ENCODE measurements at regions of chr11 and their contacts with region 1.

Region 1: GRCh38 chr11:119018074-119018938 is at the starts of genes RPS25 and TRAPPC4:
- DNase-seq: peak; percentile 99
- ATAC-seq: peak; percentile 82
- H3K4me3 ChIP-seq: peak within 1 kb of the TSS; percentile 98
- H3K27ac ChIP-seq: peak within 1 kb of the TSS; percentile 88
- H3K4me1 ChIP-seq: peaks cover 31% of the 10 kb centered on the region
- H3K27me3 ChIP-seq: no peaks in the 10 kb centered on the region
- CTCF ChIP-seq: no peak
- total RNA-seq, gene RPS25: 813 and 931 TPM in 2 replicates
- total RNA-seq, gene TRAPPC4: 129 and 150 TPM in 2 replicates

Region 2: GRCh38 chr11:118791111-118791965 is 227.0 kb before region 1 on chr11 and contains the start of gene DDX6:
- CTCF ChIA-PET with region 1: no interaction called
- POLR2A ChIA-PET with region 1: interaction called, 10 read pairs
- intact Hi-C with region 1: no loop called
- DNase-seq: peak; percentile 75
- ATAC-seq: peak; percentile 65
- H3K4me3 ChIP-seq: peak within 1 kb of the TSS; percentile 88
- H3K27ac ChIP-seq: peak within 1 kb of the TSS; percentile 81
- H3K4me1 ChIP-seq: peaks cover 31% of the 10 kb centered on the region
- H3K27me3 ChIP-seq: no peaks in the 10 kb centered on the region
- CTCF ChIP-seq: peak; percentile 26
- total RNA-seq, gene DDX6: 59.4 and 66.3 TPM in 2 replicates

Region 3: DNA sequence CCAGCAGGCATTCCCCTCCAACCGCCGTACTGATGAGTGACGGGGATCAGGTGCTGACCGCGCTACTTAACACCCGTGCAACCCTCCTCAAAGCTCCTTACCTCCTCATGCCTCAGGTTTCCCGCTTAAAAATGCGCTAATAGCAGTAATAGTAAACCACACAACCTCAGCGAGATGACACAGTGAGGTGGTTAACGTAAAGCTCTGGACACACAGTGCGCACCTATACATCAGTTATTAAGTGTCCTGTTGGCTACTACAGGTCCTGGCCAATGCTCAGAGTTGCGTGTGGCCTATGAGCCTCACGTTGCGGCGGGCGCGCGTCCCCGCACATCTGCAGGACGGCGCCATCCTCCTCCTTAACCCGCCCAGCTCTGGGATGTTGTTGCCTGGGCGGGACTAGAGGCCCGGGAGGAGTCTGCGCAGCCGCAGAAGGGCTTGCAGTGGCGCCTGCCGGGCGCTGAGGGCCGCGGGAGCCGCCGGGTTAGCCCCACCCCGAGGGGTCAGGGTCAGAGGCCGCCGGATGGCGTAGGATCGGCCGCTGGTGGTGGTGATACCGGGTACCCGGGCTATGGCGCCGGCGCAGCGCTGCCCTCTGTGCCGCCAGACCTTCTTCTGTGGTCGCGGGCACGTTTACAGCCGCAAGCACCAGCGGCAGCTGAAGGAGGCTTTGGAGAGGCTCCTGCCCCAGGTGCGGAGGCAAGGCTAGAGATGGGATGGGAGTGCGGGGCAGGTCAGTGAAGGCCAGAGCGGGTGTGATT is 20.5 kb before region 1 on chr11 and contains the start of gene CENATAC:
- CTCF ChIA-PET with region 1: interaction called, 7 read pairs
- POLR2A ChIA-PET with region 1: interaction called, 13 read pairs
- intact Hi-C with region 1: loop called (anchors 2 kb)
- DNase-seq: peak; percentile 95
- ATAC-seq: peak; percentile 92
- H3K4me3 ChIP-seq: peak within 1 kb of the TSS; percentile 77
- H3K27ac ChIP-seq: peak within 1 kb of the TSS; percentile 41
- H3K4me1 ChIP-seq: peaks cover 38% of the 10 kb centered on the region
- H3K27me3 ChIP-seq: no peaks in the 10 kb centered on the region
- CTCF ChIP-seq: no peak
- total RNA-seq, gene CENATAC: 83.5 and 88.0 TPM in 2 replicates

Region 4: DNA sequence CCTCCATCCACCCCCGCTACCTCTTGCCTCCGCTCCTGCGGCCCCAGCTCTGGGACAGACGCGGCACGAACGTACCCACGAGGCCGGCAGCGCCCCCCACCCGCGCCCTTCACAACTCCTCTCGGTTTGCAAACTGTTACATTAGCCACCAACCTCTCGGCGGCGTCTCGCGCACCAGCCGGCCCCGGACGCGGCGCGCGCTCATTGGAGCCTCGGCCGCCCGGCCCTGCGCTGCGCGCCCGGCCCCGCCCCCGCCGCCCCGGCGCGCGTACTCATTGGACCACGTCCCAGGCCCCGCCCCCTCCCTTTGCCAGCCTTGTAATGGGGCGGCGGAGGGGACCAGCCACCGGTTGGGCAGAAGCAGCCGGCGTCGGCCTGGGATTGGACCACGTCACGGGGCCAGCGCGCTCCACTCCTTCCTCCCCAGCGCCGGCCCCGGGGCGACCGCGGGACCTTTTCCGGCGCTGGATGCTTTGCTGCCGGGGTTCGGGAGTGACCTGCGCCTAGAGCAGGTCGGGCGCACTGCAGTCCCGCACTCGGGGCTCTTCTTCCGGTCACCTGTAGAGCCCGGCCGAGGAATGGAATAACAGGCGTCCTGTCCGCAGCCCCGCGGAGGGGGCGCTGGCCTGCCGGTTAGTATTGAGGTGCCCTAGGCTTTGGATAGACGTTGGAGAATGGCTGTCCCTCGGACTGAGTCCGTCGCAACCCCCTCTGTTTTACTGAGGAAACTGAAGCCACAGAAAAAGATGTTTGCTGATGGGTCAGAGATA is 38.9 kb after region 1 on chr11 and contains the start of gene HYOU1:
- CTCF ChIA-PET with region 1: no interaction called
- POLR2A ChIA-PET with region 1: interaction called, 4 read pairs
- intact Hi-C with region 1: loop called (anchors 5 kb)
- DNase-seq: peak; percentile 98
- ATAC-seq: peak; percentile 93
- H3K4me3 ChIP-seq: peak within 1 kb of the TSS; percentile 93
- H3K27ac ChIP-seq: peak within 1 kb of the TSS; percentile 62
- H3K4me1 ChIP-seq: peaks cover 15% of the 10 kb centered on the region
- H3K27me3 ChIP-seq: no peaks in the 10 kb centered on the region
- CTCF ChIP-seq: peak; percentile 24
- total RNA-seq, gene HYOU1: 168 and 208 TPM in 2 replicates